Activated CD4-positive, alpha-beta T cell treated with anti-CD3 and anti-CD28 coated beads for 36 hours (primary cell): ENCODE measurements at regions of chr6 and their contacts with region 1.

Region 1: DNA sequence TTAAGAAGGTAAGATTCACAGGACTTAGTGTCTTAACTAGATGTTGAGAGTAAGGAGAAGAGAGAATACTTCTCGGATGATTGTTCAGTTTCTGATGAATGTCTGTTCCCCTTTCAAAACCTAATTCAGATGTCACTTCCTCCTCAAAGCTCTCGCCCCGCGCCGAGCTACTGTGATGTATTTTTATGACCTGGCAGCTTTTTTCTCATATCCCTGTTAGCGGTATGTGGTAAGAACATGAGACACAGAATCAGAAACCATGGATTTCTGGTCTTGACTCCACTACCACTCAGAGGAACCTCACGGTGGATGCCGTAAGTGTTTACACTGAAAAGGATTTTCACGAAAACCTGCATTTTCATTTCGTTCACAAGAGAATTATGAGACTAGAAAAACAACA is 48.4 kb downstream of the CEP43 start:
- DNase-seq: peak; percentile 82
- ATAC-seq: peak; percentile 87
- H3K4me3 Mint-ChIP-seq: peak overlapping the region; percentile 34
- H3K27ac Mint-ChIP-seq: peak overlapping the region; percentile 76
- H3K4me1 Mint-ChIP-seq: peaks cover 41% of the 10 kb centered on the region
- H3K27me3 Mint-ChIP-seq: no peaks in the 10 kb centered on the region

Region 2: GRCh38 chr6:166999145-166999883 is 48.2 kb before region 1 on chr6 and contains the start of gene CEP43:
- CTCF ChIA-PET with region 1: interaction called, 5 read pairs
- POLR2A ChIA-PET with region 1: interaction called, 4 read pairs
- intact Hi-C with region 1: loop called (anchors 1 to 2 kb)
- DNase-seq: peak; percentile 91
- ATAC-seq: peak; percentile 96
- H3K4me3 Mint-ChIP-seq: peak within 1 kb of the TSS; percentile 85
- H3K27ac Mint-ChIP-seq: peak within 1 kb of the TSS; percentile 78
- H3K4me1 Mint-ChIP-seq: peaks cover 26% of the 10 kb centered on the region
- H3K27me3 Mint-ChIP-seq: no peaks in the 10 kb centered on the region
- total RNA-seq, gene CEP43: 19.9 to 20.0 TPM

Region 3: GRCh38 chr6:167093922-167094432 is 46.4 kb after region 1 on chr6:
- CTCF ChIA-PET with region 1: interaction called, 4 read pairs
- POLR2A ChIA-PET with region 1: interaction called, 10 read pairs
- intact Hi-C with region 1: no loop called
- DNase-seq: peak; percentile 75
- ATAC-seq: peak; percentile 73
- H3K4me3 Mint-ChIP-seq: peak overlapping the region; percentile 29
- H3K27ac Mint-ChIP-seq: peak overlapping the region; percentile 49
- H3K4me1 Mint-ChIP-seq: peaks cover 67% of the 10 kb centered on the region
- H3K27me3 Mint-ChIP-seq: no peaks in the 10 kb centered on the region

Region 4: DNA sequence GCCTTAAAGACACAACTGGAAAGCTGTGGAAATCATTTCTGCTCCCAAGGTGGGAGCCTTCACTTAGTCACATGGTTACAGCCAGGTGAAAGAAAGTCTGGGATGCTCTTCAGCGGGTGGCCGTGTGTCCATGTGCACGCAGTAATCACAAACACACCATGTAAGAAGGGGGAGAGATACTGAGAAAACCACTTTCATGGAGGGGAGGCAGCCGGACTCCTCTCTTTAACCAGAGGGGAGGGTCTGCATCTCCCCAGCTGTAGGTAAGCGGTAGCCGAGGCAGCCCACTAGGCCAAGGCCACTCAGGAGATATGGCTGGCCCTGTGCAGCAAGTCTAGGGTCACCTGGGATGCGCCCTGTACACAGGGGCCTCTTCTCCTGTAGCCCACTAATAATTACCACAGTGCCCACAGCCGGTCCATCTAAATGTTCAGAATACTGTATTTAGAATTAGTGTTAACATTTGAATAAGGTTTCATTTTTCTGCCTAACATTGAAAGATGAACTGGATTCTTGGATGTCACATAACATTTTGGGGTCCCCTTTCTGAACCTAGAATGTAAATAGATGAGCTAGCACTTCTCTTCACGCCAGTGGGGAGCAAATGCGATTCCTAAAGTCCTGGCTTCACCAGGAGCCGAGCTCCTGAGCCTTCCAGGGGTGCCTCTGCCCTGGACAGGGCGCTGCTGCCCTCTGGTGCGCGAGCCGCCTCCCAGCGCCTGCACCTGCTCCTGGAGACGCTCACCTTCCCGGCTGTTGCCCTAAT is 94.3 kb after region 1 on chr6:
- CTCF ChIA-PET with region 1: interaction called, 4 read pairs
- POLR2A ChIA-PET with region 1: no interaction called
- intact Hi-C with region 1: loop called in 1 of 2 experiments (anchors 5 kb)
- DNase-seq: peak; percentile 75
- ATAC-seq: peak; percentile 85
- H3K4me3 Mint-ChIP-seq: no peak overlapping the region
- H3K27ac Mint-ChIP-seq: no peak overlapping the region
- H3K4me1 Mint-ChIP-seq: peaks cover 22% of the 10 kb centered on the region
- H3K27me3 Mint-ChIP-seq: peaks cover 3% of the 10 kb centered on the region

Region 5: GRCh38 chr6:167350731-167351655 is 303.4 kb after region 1 on chr6:
- CTCF ChIA-PET with region 1: interaction called, 4 read pairs
- POLR2A ChIA-PET with region 1: interaction called, 4 read pairs
- intact Hi-C with region 1: loop called (anchors 5 kb)
- DNase-seq: peak; percentile 96
- ATAC-seq: peak; percentile 80
- H3K4me3 Mint-ChIP-seq: peak overlapping the region; percentile 57
- H3K27ac Mint-ChIP-seq: peak overlapping the region; percentile 90
- H3K4me1 Mint-ChIP-seq: peaks cover 27% of the 10 kb centered on the region
- H3K27me3 Mint-ChIP-seq: peaks cover 39% of the 10 kb centered on the region